ENCODE measurements at regions of chr17 and their contacts with region 1.

Region 1: GRCh38 chr17:63621766-63622519 is at the start of gene MAP3K3:
- DNase-seq: peak; percentile 79 to 99 (median 98)
- ATAC-seq: peak; percentile 93
- H3K4me3 ChIP-seq: peak within 1 kb of the TSS; percentile 82
- H3K4me3 Mint-ChIP-seq: peak within 1 kb of the TSS; percentile 96 to 100 (median 99)
- H3K27ac ChIP-seq: peak within 1 kb of the TSS; percentile 75
- H3K27ac Mint-ChIP-seq: peak within 1 kb of the TSS; percentile 83 to 97 (median 95)
- H3K4me1 ChIP-seq: peaks cover 21 to 31% of the 10 kb centered on the region in 2 donors
- H3K4me1 Mint-ChIP-seq: peaks cover 34 to 48% (median 42%) of the 10 kb centered on the region in 7 donors
- H3K27me3 ChIP-seq: peaks cover 0 to 3% of the 10 kb centered on the region in 2 donors
- H3K27me3 Mint-ChIP-seq: peaks cover 0 to 12% (median 0%) of the 10 kb centered on the region in 5 donors
- total RNA-seq, gene MAP3K3: 37.5 to 105 (median 85.5) TPM

Region 2: GRCh38 chr17:62703775-62704378 is 918.1 kb before region 1 on chr17:
- CTCF ChIA-PET with region 1: no interaction called
- POLR2A ChIA-PET with region 1: no interaction called
- intact Hi-C with region 1: loop called in 1 of 2 experiments (anchors 5 kb)
- DNase-seq: peak; percentile 31 to 81 (median 71)
- ATAC-seq: peak; percentile 96
- H3K4me3 ChIP-seq: peak overlapping the region; percentile 43
- H3K4me3 Mint-ChIP-seq: peak overlapping the region in 8 of 10 donors; percentile 25 to 77 (median 51)
- H3K27ac ChIP-seq: no peak overlapping the region
- H3K27ac Mint-ChIP-seq: no peak overlapping the region
- H3K4me1 ChIP-seq: peaks cover 5 to 9% of the 10 kb centered on the region in 2 donors
- H3K4me1 Mint-ChIP-seq: peaks cover 0 to 7% (median 4%) of the 10 kb centered on the region in 7 donors
- H3K27me3 ChIP-seq: no peaks in the 10 kb centered on the region
- H3K27me3 Mint-ChIP-seq: peaks cover 0 to 39% (median 6%) of the 10 kb centered on the region in 5 donors

Region 3: GRCh38 chr17:63464691-63465236 is 157.2 kb before region 1 on chr17:
- CTCF ChIA-PET with region 1: no interaction called
- POLR2A ChIA-PET with region 1: no interaction called
- intact Hi-C with region 1: no loop called
- DNase-seq: no peak
- ATAC-seq: no peak
- H3K4me3 ChIP-seq: no peak overlapping the region
- H3K4me3 Mint-ChIP-seq: no peak overlapping the region
- H3K27ac ChIP-seq: no peak overlapping the region
- H3K27ac Mint-ChIP-seq: no peak overlapping the region
- H3K4me1 ChIP-seq: no peaks in the 10 kb centered on the region
- H3K4me1 Mint-ChIP-seq: peaks cover 0 to 2% (median 0%) of the 10 kb centered on the region in 7 donors
- H3K27me3 ChIP-seq: no peaks in the 10 kb centered on the region
- H3K27me3 Mint-ChIP-seq: peaks cover 0 to 29% (median 4%) of the 10 kb centered on the region in 5 donors

Region 4: DNA sequence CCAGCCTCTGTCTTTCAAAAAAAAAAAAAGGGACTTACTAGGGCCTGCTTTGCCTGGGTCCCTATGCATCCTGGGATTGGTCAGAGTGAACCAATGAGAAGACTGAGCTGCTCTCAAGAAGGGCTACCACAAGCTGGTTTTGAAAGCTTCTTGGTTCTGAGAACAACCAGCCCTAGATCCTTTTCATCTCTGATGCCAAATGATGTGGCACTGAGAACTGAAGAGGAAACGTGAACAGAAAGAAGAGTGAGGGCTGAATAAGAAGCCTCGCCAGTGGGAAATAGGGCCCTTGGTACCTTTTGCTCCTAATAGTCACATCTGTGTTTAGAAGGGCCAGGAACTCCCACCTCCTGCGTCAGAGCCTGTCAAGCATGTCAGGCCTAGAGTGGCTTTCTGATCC is 10.6 kb before region 1 on chr17:
- CTCF ChIA-PET with region 1: interaction called, 8 read pairs
- POLR2A ChIA-PET with region 1: interaction called, 23 read pairs
- intact Hi-C with region 1: loop called in 1 of 2 experiments (anchors 1 kb)
- DNase-seq: peak in 5 of 9 donors; percentile 3 to 57 (median 25)
- ATAC-seq: peak; percentile 47
- H3K4me3 ChIP-seq: no peak overlapping the region
- H3K4me3 Mint-ChIP-seq: peak overlapping the region in 9 of 10 donors; percentile 10 to 74 (median 58)
- H3K27ac ChIP-seq: peak overlapping the region; percentile 52
- H3K27ac Mint-ChIP-seq: peak overlapping the region; percentile 85 to 98 (median 93)
- H3K4me1 ChIP-seq: peaks cover 25 to 28% of the 10 kb centered on the region in 2 donors
- H3K4me1 Mint-ChIP-seq: peaks cover 22 to 30% (median 29%) of the 10 kb centered on the region in 7 donors
- H3K27me3 ChIP-seq: no peaks in the 10 kb centered on the region
- H3K27me3 Mint-ChIP-seq: no peaks in the 10 kb centered on the region

Region 5: GRCh38 chr17:63707151-63707550 is 85.2 kb after region 1 on chr17:
- CTCF ChIA-PET with region 1: interaction called, 5 read pairs
- POLR2A ChIA-PET with region 1: interaction called, 32 read pairs
- intact Hi-C with region 1: loop called in 1 of 2 experiments (anchors 1 kb)
- DNase-seq: peak in 6 of 9 donors; percentile 45 to 61 (median 50)
- ATAC-seq: peak; percentile 52
- H3K4me3 ChIP-seq: peak overlapping the region; percentile 43
- H3K4me3 Mint-ChIP-seq: peak overlapping the region; percentile 59 to 97 (median 77)
- H3K27ac ChIP-seq: peak overlapping the region; percentile 71
- H3K27ac Mint-ChIP-seq: peak overlapping the region; percentile 83 to 98 (median 90)
- H3K4me1 ChIP-seq: peaks cover 62 to 72% of the 10 kb centered on the region in 2 donors
- H3K4me1 Mint-ChIP-seq: peaks cover 56 to 85% (median 76%) of the 10 kb centered on the region in 7 donors
- H3K27me3 ChIP-seq: no peaks in the 10 kb centered on the region
- H3K27me3 Mint-ChIP-seq: no peaks in the 10 kb centered on the region

Region 6: DNA sequence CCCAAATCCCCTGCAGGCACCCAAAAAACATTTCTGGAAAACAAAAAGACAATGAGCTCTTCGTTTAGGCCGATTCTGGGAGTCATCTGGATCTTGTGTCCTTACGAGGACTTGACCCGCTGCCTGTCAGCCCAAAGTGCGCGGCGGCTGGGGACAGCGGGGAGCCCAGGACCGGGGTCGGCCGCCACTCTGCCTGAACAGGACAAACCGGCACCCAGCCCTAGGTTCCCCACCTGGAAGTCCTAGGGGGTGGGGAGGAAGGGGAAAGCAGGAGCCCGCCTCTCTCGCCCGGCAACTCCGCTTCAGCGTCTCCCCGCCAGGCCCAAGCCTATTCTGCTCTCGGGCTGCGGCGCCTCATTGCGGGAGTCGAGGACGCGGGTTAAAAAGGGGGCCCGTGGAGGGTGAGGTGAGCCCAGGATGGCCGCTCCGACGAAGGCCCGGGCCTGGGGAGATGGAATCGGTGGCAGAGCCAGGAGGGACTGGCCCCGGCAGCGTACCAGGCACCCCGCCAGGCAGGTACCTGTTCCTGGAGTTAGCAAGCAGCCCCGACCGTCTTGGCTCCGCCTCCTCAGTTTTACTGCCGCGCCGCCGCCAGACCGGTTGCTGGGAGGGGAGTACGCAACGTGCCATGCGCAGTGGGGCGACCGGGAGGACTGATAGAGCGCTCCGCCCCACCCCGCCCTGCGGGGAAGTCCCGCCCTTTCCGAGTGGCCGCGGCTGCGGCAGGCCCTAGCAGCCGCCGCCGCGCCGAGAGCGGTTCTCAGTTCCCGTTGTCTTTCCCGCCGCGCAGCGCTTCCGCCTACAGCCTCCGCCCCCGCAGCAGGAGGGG is 119.5 kb after region 1 on chr17 and contains the start of gene STRADA:
- CTCF ChIA-PET with region 1: no interaction called
- POLR2A ChIA-PET with region 1: interaction called, 6 read pairs
- intact Hi-C with region 1: loop called (anchors 1 kb)
- DNase-seq: peak; percentile 95 to 99 (median 98)
- ATAC-seq: peak; percentile 97
- H3K4me3 ChIP-seq: peak within 1 kb of the TSS; percentile 74
- H3K4me3 Mint-ChIP-seq: peak within 1 kb of the TSS; percentile 83 to 98 (median 89)
- H3K27ac ChIP-seq: peak within 1 kb of the TSS; percentile 96
- H3K27ac Mint-ChIP-seq: peak within 1 kb of the TSS; percentile 88 to 99 (median 93)
- H3K4me1 ChIP-seq: peaks cover 0 to 8% of the 10 kb centered on the region in 2 donors
- H3K4me1 Mint-ChIP-seq: peaks cover 6 to 36% (median 24%) of the 10 kb centered on the region in 7 donors
- H3K27me3 ChIP-seq: no peaks in the 10 kb centered on the region
- H3K27me3 Mint-ChIP-seq: no peaks in the 10 kb centered on the region
- total RNA-seq, gene STRADA: 51.0 to 69.7 (median 54.2) TPM

Region 7: GRCh38 chr17:63827002-63827771 is 205.2 kb after region 1 on chr17 and contains the starts of genes FTSJ3 and PSMC5:
- CTCF ChIA-PET with region 1: no interaction called
- POLR2A ChIA-PET with region 1: no interaction called
- intact Hi-C with region 1: loop called (anchors 1 to 5 kb)
- DNase-seq: peak; percentile 89 to 98 (median 96)
- ATAC-seq: peak; percentile 97
- H3K4me3 ChIP-seq: peak within 1 kb of the TSS; percentile 89
- H3K4me3 Mint-ChIP-seq: peak within 1 kb of the TSS; percentile 93 to 100 (median 98)
- H3K27ac ChIP-seq: peak within 1 kb of the TSS; percentile 87
- H3K27ac Mint-ChIP-seq: peak within 1 kb of the TSS; percentile 98 to 100 (median 99)
- H3K4me1 ChIP-seq: peaks cover 27 to 46% of the 10 kb centered on the region in 2 donors
- H3K4me1 Mint-ChIP-seq: peaks cover 43 to 82% (median 77%) of the 10 kb centered on the region in 7 donors
- H3K27me3 ChIP-seq: no peaks in the 10 kb centered on the region
- H3K27me3 Mint-ChIP-seq: no peaks in the 10 kb centered on the region
- total RNA-seq, gene FTSJ3: 38.1 to 66.2 (median 55.8) TPM
- total RNA-seq, gene PSMC5: 68.4 to 153 (median 105) TPM

Region 8: GRCh38 chr17:63837481-63837880 is 215.5 kb after region 1 on chr17:
- CTCF ChIA-PET with region 1: no interaction called
- POLR2A ChIA-PET with region 1: no interaction called
- intact Hi-C with region 1: no loop called
- DNase-seq: no peak
- ATAC-seq: no peak
- H3K4me3 ChIP-seq: no peak overlapping the region
- H3K4me3 Mint-ChIP-seq: peak overlapping the region in 1 of 10 donors; percentile 96
- H3K27ac ChIP-seq: peak overlapping the region; percentile 59
- H3K27ac Mint-ChIP-seq: peak overlapping the region in 3 of 9 donors; percentile 28 to 76 (median 43)
- H3K4me1 ChIP-seq: peaks cover 34 to 37% of the 10 kb centered on the region in 2 donors
- H3K4me1 Mint-ChIP-seq: peaks cover 31 to 64% (median 51%) of the 10 kb centered on the region in 7 donors
- H3K27me3 ChIP-seq: no peaks in the 10 kb centered on the region
- H3K27me3 Mint-ChIP-seq: no peaks in the 10 kb centered on the region

Measured in naive thymus-derived CD4-positive, alpha-beta T cell (primary cell).